Esophagus squamous epithelium (tissue), 5 donors: ENCODE measurements at regions of chr6 and their contacts with region 1.

Region 1: GRCh38 chr6:26607434-26608230 is 10.9 kb downstream of the ABT1 start:
- DNase-seq: no peak
- H3K4me3 ChIP-seq: peak overlapping the region in 1 of 4 donors; percentile 38
- H3K27ac ChIP-seq: no peak overlapping the region
- H3K4me1 ChIP-seq: no peaks in the 10 kb centered on the region
- H3K27me3 ChIP-seq: peaks cover 0 to 18% (median 0%) of the 10 kb centered on the region in 4 donors
- CTCF ChIP-seq: peak; percentile 28 to 71 (median 52)
- POLR2A ChIP-seq: no peak

Region 2: GRCh38 chr6:26532699-26533531 is 74.7 kb before region 1 on chr6:
- intact Hi-C with region 1: no loop called
- DNase-seq: peak; percentile 49
- H3K4me3 ChIP-seq: peak overlapping the region; percentile 40 to 80 (median 68)
- H3K27ac ChIP-seq: peak overlapping the region; percentile 59 to 92 (median 86)
- H3K4me1 ChIP-seq: peaks cover 15 to 47% (median 20%) of the 10 kb centered on the region in 3 donors
- H3K27me3 ChIP-seq: no peaks in the 10 kb centered on the region
- CTCF ChIP-seq: no peak
- POLR2A ChIP-seq: no peak

Region 3: GRCh38 chr6:27081931-27082330 is 474.3 kb after region 1 on chr6:
- intact Hi-C with region 1: loop called (anchors 10 kb)
- DNase-seq: no peak
- H3K4me3 ChIP-seq: no peak overlapping the region
- H3K27ac ChIP-seq: no peak overlapping the region
- H3K4me1 ChIP-seq: peaks cover 0 to 4% (median 3%) of the 10 kb centered on the region in 3 donors
- H3K27me3 ChIP-seq: peaks cover 0 to 69% (median 1%) of the 10 kb centered on the region in 4 donors
- CTCF ChIP-seq: no peak
- POLR2A ChIP-seq: no peak

Region 4: DNA sequence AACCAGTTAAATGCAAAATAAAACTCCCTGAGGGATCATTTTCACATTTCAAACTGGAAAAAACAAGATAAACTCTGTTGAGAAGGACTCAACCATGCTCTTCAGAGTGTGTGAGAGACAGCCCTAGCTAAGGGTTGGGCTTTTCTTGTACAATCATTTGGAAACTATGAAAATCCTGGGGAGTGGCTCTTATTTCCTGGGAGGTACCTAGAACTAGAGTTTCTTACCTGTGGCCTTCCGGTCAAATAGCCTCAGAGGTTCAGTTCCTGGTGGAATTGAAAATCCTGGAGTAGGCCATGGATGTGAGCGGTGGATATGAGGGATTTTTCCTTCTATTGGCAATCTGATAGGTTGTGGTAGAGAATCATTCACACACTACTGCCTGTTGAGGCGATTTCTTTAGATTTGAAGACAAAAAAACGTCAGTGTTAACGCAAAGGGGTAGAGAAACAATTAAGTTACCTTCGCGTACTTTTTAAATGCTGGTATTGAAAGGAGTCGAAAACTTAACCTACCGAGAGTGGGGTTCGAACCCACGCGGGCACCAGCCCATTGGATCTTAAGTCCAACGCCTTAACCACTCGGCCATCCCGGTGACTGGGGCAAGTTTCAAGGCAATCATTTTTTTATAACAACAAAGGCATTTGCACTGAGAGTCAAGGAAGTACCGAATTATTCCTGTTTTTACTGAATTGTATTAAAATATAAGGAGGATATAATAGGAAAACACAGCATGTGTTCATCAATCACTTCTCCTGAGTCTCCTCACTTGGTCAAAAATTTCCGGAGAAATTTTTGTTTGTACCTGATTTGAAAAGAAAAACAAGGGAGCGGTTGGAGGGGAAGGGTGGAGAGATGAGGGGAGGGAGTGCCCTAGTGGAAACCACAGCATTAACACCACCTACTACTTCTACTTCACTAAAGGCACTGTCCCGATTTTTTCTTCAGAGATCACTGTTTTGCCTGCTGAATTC is 1113.3 kb after region 1 on chr6:
- intact Hi-C with region 1: no loop called
- DNase-seq: no peak
- H3K4me3 ChIP-seq: no peak overlapping the region
- H3K27ac ChIP-seq: no peak overlapping the region
- H3K4me1 ChIP-seq: no peaks in the 10 kb centered on the region
- H3K27me3 ChIP-seq: peaks cover 0 to 49% (median 0%) of the 10 kb centered on the region in 4 donors
- CTCF ChIP-seq: no peak
- POLR2A ChIP-seq: no peak